Posterior cingulate gyrus (tissue), 11 donors: ENCODE measurements at regions of chr4 and their contacts with region 1.

Region 1: DNA sequence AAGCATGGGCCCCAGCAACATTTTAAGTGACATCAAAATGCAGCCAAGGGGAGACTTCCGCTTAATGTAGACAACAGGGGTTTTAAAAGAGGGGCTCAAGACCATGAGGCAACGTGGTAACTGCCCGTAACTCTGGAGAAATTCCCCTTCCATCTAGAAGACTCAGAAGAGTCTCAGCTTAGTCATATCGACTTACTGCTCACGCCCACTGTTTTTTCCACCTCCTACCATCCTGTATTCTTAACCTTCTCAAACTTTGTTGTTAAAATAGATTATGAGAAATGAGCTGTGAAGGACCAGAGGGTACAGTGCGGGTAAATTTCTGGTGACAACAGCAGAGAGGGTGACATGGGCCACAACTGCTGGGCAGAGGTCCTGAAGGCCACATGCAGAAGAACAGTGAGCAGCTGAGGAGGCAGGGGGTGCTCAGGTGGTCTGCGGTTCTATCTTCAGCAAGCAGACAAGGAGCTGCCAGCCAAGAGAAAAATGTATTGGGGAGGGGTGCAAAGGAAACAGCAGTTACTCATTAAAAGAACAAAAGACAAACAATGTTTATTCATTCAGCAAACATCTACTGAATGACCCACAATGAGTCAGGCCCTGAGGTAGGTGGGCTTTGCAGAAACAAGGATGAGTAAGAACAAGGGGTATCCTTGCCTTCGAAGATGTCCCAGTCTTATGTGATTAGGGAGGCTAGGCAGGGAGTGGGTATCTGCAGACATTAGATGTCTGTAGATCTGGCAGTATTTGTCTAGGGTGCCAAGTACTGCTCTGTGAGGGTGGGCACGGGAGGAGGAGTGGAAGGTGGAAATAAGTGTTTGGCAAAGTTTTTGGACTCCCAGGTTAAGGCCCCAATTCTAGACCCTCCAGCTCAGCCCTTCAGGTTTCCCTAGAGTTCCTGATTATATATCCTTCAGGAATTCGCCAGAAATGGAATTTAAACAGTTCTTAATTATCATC is 175.3 kb downstream of the TSPAN5 start:
- DNase-seq: no peak

Region 2: DNA sequence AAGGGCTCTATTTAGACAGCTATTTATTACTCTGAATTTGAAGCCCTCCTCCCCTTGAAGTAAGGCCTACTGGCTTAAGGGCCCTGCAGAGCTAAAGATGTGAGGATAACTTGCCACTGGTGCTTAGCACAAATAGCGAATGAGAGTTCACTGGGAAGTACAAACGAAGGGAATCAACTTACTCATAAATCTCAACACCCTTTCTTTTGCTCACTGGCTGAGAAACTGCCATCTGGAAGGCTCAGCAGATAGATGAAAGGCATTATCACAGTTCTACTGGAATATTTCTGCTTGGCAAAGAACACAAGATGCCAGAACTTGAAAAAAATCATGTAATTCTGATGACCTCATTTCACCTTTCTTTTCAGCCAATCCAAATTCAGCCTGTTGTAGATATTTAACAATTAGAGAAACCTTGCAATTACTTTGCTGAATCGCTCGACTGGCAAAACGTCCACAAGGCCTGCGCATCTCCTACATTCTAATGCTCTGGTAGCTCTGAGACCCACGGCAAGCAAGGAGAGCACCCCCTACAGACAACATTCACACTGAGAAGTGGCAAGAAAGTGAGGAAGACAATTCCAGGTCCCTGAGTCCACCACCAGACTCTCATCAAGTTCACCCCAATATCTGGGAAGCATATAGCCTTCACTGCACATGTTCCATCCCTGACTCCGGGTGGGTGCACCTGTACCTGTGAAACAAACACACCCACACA is 147.8 kb after region 1 on chr4:
- intact Hi-C with region 1: loop called (anchors 5 kb)
- DNase-seq: peak in 3 of 10 donors; percentile 14 to 84 (median 44)